ENCODE measurements at regions of chr2 and their contacts with region 1.

Region 1: GRCh38 chr2:136693966-136694365 is 71.4 kb upstream of the THSD7B start:
- DNase-seq: no peak
- H3K4me3 ChIP-seq: no peak overlapping the region
- H3K27ac ChIP-seq: no peak overlapping the region
- H3K4me1 ChIP-seq: no peaks in the 10 kb centered on the region
- H3K27me3 ChIP-seq: no peaks in the 10 kb centered on the region
- CTCF ChIP-seq: no peak
- POLR2A ChIP-seq: no peak

Region 2: DNA sequence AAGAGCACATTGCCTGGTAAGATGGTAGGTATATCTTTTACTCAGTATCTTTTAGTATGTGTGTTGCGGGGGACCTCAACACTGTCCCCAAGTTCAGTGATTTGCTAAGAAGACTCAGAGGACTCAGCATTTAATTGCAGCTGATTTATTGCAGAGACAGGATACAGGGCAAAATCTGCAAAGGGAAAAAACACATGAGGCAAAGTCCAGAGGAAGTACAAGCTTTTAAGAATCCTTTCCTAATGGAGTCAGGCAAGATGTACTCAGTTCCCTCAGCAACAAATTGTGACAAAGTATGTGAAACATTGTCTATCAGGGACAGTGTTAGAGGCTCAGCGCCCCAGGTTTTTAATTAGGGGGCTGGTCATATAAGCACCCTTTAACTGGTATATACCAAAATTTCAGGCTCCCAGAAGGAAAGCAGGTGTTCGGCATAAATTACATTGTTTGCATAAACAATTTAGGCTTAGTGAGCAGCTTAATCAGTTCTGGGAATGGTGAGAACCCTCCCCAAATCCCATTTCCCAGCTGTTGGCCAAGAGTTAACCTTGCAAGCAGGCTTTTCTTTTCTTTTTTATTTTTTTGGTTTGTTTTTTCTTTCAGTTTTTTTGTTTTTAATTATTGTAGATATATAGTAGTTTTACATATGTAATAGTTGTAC is 1600.2 kb before region 1 on chr2:
- intact Hi-C with region 1: loop called (anchors 5 kb)
- DNase-seq: no peak
- H3K4me3 ChIP-seq: no peak overlapping the region
- H3K27ac ChIP-seq: no peak overlapping the region
- H3K4me1 ChIP-seq: no peaks in the 10 kb centered on the region
- H3K27me3 ChIP-seq: no peaks in the 10 kb centered on the region
- CTCF ChIP-seq: no peak
- POLR2A ChIP-seq: no peak

Region 3: GRCh38 chr2:138030459-138030858 is 1336.5 kb after region 1 on chr2:
- intact Hi-C with region 1: no loop called
- DNase-seq: no peak
- H3K4me3 ChIP-seq: no peak overlapping the region
- H3K27ac ChIP-seq: no peak overlapping the region
- H3K4me1 ChIP-seq: no peaks in the 10 kb centered on the region
- H3K27me3 ChIP-seq: no peaks in the 10 kb centered on the region
- CTCF ChIP-seq: no peak
- POLR2A ChIP-seq: no peak